ENCODE measurements at regions of chr7 and their contacts with region 1.

Region 1: GRCh38 chr7:98168181-98168905 is 42.9 kb upstream of the BHLHA15 start:
- DNase-seq: peak; percentile 38 to 79
- H3K4me3 ChIP-seq: no peak overlapping the region
- H3K4me1 ChIP-seq: no peaks in the 10 kb centered on the region
- H3K27me3 ChIP-seq: no peaks in the 10 kb centered on the region

Region 2: DNA sequence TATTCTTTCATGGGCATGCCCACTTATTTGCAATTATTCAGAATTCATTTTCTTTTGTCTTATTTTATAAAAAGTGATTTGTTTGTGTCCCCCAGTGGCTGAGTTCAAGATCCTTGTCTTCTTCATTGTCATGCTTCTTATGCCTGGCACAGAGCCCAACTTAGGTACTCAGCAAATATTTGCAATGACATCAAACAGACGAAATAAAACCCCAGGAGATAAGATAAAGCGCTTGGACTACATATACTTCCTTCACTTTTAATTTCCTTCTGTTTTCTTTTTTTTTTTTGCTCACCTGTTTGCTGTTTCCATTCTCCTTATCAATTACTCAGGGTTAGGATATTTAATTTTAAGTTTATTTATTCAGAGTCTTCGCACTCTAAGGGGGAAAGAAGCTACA is 825.8 kb before region 1 on chr7:
- in situ Hi-C with region 1: no loop called
- DNase-seq: no peak
- H3K4me3 ChIP-seq: no peak overlapping the region
- H3K4me1 ChIP-seq: no peaks in the 10 kb centered on the region
- H3K27me3 ChIP-seq: no peaks in the 10 kb centered on the region

Region 3: DNA sequence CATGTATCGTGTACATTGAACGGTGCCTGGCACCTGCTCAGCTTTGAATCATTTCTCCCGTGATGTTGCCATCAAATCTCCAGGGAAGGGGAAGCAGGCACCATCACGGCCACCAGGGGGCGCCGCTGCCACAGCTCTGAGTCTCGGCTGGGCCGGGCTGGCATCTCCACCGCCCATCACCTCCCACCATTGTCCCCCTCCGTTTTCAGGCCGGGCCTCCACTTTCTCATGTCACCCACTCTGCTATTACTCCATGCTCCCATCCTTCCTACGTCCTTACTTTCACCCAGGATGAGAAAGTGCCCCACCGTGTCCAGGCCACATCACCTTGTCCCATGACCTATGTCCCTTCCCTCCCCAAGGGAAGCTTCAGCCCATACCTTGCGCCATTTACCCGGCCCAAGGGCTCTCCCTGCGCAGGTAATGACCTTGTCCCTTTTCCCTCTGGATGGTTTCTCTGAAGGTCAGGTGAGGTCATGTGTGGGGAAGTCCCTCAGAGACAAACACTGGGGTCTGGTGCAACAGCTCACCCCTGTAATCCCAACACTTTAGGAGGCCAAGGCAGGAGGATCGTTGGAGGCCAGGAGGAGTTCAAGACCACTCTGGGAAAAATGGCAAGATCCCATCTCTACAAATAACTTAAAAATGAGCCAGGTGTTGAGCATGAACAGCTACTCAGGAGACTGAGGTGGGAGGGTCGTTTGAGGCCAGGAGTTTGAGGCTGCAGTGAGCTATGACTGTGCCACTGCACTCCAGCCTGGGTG is 146.6 kb before region 1 on chr7:
- in situ Hi-C with region 1: loop called (anchors 5 kb)
- DNase-seq: peak; percentile 59 to 91
- H3K4me3 ChIP-seq: no peak overlapping the region
- H3K4me1 ChIP-seq: no peaks in the 10 kb centered on the region
- H3K27me3 ChIP-seq: no peaks in the 10 kb centered on the region

Region 4: GRCh38 chr7:98106647-98107445 is 61.5 kb before region 1 on chr7 and contains the start of gene LMTK2:
- in situ Hi-C with region 1: loop called (anchors 10 kb)
- DNase-seq: peak; percentile 71 to 94
- H3K4me3 ChIP-seq: peak within 1 kb of the TSS; percentile 91
- H3K4me1 ChIP-seq: peaks cover 18% of the 10 kb centered on the region
- H3K27me3 ChIP-seq: no peaks in the 10 kb centered on the region